ENCODE measurements at regions of chr1 and their contacts with region 1.

Region 1: DNA sequence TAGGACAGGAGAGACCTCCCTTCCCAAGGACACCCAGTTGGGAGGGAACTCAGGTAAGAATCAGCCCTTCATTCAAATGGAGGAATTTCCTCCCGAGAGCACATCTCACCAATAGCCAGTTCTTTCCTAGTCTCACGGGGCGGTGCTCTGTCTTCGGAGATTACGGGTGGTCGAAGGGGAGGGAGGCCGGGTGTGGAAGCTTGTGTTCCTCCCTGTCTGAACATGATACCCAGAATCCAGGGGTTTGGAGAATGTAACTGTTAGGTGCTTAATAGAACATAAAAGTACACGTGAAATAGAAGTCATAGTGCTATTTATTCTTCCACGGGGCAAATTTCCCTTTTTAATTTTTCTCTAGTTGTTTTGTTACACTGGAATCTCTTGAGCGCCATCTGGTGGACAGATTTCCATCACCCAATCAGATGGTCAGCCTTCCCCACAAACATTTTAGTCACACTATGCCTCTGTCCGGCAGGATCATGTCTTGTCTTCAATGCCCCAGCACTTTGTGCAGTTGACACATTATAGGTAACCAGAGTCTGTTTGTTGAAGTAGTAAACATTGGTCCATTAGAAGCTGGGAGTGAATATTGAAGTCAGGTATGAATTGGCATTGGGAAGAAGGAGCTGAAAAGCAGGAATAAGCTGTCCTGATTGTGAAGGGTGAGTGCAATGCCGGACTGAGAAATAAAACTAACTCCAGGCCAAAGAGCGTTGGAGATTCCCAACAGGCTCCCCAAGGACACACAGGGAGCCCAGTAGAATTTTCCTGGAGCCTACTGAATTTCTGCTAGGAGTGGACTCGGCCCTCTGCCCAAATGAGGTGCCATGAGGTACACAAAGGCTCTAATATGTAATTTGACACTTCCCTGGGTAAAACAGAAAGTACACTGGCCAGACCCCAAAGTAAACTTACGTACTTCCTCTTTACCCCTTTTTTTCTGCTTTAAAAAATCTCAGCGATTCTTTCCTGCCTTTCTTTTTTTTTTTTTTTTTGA is 27.6 kb upstream of the ZNF697 start:
- DNase-seq: peak; percentile 78
- H3K4me3 ChIP-seq: peak overlapping the region; percentile 42 to 45 (median 43)
- H3K27ac ChIP-seq: peak overlapping the region; percentile 87
- H3K4me1 ChIP-seq: peaks cover 36% of the 10 kb centered on the region
- H3K27me3 ChIP-seq: no peaks in the 10 kb centered on the region
- CTCF ChIP-seq: peak; percentile 76 to 79

Region 2: DNA sequence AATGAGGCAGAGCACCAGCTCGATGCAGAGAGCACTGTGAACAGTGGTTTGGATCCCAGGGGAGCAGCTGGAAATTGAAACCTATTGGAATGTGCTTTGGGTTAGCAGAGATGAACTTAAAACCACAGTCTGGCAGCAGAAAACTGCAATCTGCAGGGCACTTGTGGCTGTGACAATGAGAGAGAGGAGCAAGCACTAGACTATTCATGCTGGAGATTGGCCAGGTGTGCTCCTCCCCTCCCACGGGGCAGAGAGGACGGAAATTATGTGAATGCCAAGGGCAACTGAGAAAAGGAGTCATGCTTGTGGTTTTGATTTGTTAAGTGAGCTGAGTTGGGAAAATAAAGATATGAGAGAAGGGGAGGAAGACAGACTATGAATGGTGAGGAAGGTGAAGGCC is 222.6 kb before region 1 on chr1:
- CTCF ChIA-PET with region 1: no interaction called
- dilution Hi-C with region 1: no loop called
- in situ Hi-C with region 1: no loop called
- intact Hi-C with region 1: loop called (anchors 10 kb)
- DNase-seq: peak; percentile 94
- H3K4me3 ChIP-seq: no peak overlapping the region
- H3K27ac ChIP-seq: no peak overlapping the region
- H3K4me1 ChIP-seq: peaks cover 21% of the 10 kb centered on the region
- H3K27me3 ChIP-seq: no peaks in the 10 kb centered on the region
- CTCF ChIP-seq: no peak

Region 3: DNA sequence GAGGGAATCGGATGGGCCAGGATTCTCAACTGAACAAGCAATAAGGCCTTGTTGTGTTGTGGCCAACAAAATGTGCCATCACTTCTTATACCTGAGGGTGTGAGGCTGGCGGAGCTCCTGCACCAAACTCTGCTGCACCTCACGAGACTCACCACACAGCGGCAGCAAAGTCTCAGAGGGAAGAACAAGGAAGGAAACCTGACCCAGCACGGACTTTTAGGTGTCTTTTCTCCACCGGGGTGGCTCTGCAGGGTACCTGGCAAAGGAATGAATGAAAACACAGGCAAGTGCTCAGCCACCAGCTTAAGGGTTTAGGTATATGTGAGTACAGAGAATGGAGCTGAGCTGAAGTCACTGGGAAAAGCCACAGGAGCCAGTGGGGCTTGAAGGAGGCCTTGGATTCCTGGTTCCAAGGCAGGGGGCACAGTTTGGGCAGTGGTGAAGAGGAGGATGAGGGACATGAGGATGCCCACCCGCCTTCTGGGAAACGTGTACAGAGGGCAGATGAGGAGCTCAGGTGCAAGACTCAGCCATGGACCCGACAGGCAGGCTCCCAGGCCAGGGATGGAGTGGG is 199.7 kb before region 1 on chr1:
- CTCF ChIA-PET with region 1: no interaction called
- dilution Hi-C with region 1: no loop called
- in situ Hi-C with region 1: no loop called
- intact Hi-C with region 1: no loop called
- DNase-seq: peak; percentile 64
- H3K4me3 ChIP-seq: no peak overlapping the region
- H3K27ac ChIP-seq: no peak overlapping the region
- H3K4me1 ChIP-seq: no peaks in the 10 kb centered on the region
- H3K27me3 ChIP-seq: no peaks in the 10 kb centered on the region
- CTCF ChIP-seq: peak; percentile 92 to 95

Region 4: DNA sequence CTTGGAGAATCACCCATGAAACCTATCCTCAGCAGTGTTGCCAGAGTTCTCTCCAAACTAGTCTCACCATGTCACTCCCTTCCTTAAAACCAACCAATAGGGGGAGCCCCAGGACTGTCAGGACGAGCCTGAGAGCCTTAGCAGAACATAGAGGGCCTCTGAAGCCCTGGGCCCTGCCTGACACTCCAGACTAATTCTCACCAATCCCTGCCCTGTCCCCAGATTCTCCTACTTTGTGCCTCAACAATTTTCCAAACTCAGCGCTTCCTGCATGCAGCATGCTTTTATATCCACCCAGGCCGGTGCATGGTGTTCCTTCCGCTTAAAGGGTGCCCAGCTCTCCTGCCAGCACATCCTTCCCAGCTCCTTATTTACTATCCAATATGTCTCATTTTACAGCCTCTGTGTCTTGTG is 125.9 kb before region 1 on chr1:
- CTCF ChIA-PET with region 1: no interaction called
- dilution Hi-C with region 1: no loop called
- in situ Hi-C with region 1: no loop called
- intact Hi-C with region 1: loop called (anchors 5 kb)
- DNase-seq: peak; percentile 73
- H3K4me3 ChIP-seq: no peak overlapping the region
- H3K27ac ChIP-seq: no peak overlapping the region
- H3K4me1 ChIP-seq: peaks cover 17% of the 10 kb centered on the region
- H3K27me3 ChIP-seq: no peaks in the 10 kb centered on the region
- CTCF ChIP-seq: peak; percentile 64 to 79

Region 5: DNA sequence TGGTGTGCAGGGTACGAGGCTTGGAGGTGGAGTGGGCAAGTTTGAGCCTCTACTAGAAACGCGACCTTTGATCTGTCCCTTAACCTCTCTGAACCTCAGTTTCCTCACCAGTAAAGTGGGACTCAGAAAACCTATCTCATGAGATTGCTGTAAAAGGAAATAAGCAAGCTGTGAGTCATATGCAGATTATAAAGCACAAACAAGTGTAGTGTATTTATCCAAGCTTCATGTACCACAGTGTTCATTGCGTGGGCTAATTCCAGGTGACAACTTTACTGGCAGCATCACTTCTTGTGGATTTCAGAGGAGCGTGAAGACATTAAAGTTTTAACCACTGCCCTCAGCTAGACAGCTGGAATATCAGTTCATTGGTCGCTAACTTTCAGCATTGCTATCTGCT is 72.0 kb before region 1 on chr1:
- CTCF ChIA-PET with region 1: no interaction called
- dilution Hi-C with region 1: loop called (anchors 5 kb)
- in situ Hi-C with region 1: no loop called
- intact Hi-C with region 1: no loop called
- DNase-seq: peak; percentile 14
- H3K4me3 ChIP-seq: no peak overlapping the region
- H3K27ac ChIP-seq: no peak overlapping the region
- H3K4me1 ChIP-seq: peaks cover 23% of the 10 kb centered on the region
- H3K27me3 ChIP-seq: no peaks in the 10 kb centered on the region
- CTCF ChIP-seq: no peak

Region 6: DNA sequence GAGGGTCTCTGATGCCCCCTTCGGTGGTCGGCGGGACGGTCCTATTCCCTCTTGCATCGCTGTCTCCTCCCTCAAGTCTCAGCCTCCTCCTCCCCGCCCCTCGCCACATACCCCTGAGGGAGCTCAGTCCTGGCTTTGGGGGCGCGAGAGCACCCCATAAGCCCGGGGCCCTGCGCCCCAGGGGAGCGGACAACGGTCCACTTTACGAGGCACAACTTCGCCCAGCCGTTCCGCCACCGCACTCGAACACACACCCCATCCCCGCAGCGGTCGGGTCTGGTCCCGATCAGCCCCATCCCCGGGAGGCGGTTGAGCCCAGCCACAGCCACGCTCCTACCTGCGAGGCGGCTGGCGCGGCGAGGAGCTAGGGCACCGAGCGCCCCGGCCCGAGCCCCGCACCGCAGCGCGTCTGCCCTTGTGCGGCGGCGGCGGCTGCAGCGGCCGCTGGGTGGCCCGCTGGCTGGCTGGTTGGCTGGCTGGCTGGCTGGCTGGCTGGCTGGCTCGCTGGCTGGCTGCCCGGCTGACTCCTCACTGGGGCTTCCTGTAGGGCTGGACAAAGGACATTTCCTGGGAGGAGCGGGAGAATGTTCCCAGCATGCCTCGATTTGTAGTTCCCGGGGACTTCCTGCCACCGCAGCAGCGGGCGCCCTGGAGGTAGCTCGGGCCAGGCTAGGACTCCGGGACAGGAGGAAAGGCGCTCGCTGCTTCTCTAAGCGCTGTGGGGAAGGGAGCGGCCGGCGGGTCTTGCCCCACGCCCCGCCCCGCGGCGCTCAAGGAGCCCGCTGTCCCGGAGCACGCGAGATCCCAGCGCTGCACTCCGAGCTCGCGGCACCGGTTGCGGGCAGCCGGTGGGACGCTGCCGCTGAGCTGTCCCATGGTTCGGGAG is 27.7 kb before region 1 on chr1 and contains the start of gene ZNF697:
- CTCF ChIA-PET with region 1: interaction called, 3 read pairs
- dilution Hi-C with region 1: no loop called
- in situ Hi-C with region 1: no loop called
- intact Hi-C with region 1: loop called (anchors 1 kb)
- DNase-seq: peak; percentile 97
- H3K4me3 ChIP-seq: peak within 1 kb of the TSS; percentile 64 to 83 (median 71)
- H3K27ac ChIP-seq: peak within 1 kb of the TSS; percentile 67
- H3K4me1 ChIP-seq: peaks cover 47% of the 10 kb centered on the region
- H3K27me3 ChIP-seq: no peaks in the 10 kb centered on the region
- CTCF ChIP-seq: peak; percentile 4 to 11
- total RNA-seq, gene ZNF697: 7.3 to 9.4 TPM

Region 7: DNA sequence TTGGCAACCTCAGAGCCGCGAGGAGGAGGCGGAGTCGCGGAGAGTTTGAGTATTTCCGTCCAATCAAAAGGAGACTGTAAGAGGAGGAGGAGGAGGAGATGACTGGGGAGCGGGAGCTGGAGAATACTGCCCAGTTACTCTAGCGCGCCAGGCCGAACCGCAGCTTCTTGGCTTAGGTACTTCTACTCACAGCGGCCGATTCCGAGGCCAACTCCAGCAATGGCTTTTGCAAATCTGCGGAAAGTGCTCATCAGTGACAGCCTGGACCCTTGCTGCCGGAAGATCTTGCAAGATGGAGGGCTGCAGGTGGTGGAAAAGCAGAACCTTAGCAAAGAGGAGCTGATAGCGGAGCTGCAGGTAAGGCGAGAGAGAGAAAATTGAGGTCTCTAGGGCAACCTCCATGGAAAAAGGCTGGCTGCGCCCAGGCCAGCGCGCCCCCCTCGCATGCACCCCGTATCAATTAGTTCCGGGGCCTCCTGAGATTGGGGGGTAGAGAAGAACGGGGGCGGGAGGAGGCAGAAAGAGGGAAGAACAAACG is 36.2 kb after region 1 on chr1 and contains the start of gene PHGDH:
- CTCF ChIA-PET with region 1: interaction called, 6 read pairs
- dilution Hi-C with region 1: loop called (anchors 5 kb)
- in situ Hi-C with region 1: no loop called
- intact Hi-C with region 1: loop called (anchors 1 kb)
- DNase-seq: peak; percentile 88
- H3K4me3 ChIP-seq: peak within 1 kb of the TSS; percentile 56 to 75 (median 67)
- H3K27ac ChIP-seq: peak within 1 kb of the TSS; percentile 67
- H3K4me1 ChIP-seq: peaks cover 4% of the 10 kb centered on the region
- H3K27me3 ChIP-seq: no peaks in the 10 kb centered on the region
- CTCF ChIP-seq: no peak
- total RNA-seq, gene PHGDH: 171 to 211 TPM

Region 8: DNA sequence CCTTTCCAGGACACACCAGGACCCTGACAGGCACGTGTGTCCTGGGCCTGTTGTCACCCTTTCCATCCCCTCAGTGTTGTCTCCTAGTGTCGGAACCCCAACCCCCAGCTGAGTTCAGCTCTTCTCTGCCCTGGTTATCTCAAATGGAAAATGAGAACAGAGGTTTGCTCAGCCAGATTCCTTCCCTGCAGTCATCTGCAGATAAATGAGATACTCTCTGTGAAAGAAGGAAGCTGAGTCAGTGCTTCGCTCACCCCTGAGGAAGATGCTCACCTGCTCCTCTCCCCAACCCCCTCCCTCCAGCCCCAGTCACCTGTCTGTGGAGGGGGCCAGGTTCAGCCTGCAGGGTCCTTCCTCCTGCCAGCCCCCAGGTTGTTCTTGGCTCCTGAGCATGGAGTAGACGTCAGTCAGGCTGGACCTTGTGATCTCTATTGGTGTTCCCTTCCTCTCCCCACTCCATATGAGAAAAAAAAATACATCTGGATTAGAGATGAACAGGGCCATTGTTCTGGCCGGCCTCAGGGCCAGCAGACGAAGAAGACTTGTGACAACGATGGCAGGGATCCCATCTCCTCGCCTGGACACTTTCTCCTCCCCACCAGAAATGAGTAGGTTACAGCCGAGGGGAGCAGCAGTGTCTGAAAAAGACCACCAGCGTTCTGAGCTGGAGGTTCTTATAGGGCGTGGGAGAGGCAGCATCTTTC is 57.0 kb after region 1 on chr1:
- CTCF ChIA-PET with region 1: no interaction called
- dilution Hi-C with region 1: no loop called
- in situ Hi-C with region 1: no loop called
- intact Hi-C with region 1: loop called (anchors 5 kb)
- DNase-seq: peak; percentile 41
- H3K4me3 ChIP-seq: no peak overlapping the region
- H3K27ac ChIP-seq: no peak overlapping the region
- H3K4me1 ChIP-seq: peaks cover 31% of the 10 kb centered on the region
- H3K27me3 ChIP-seq: no peaks in the 10 kb centered on the region
- CTCF ChIP-seq: no peak

Measured in mammary epithelial cell (primary cell).